ENCODE measurements at regions of chr9 and their contacts with region 1.

Region 1: GRCh38 chr9:97873877-97874276 is 20.9 kb downstream of the FOXE1 start:
- DNase-seq: no peak
- ATAC-seq: no peak
- H3K4me3 ChIP-seq: no peak overlapping the region
- H3K4me3 Mint-ChIP-seq: no peak overlapping the region
- H3K27ac ChIP-seq: no peak overlapping the region
- H3K27ac Mint-ChIP-seq: no peak overlapping the region
- H3K4me1 ChIP-seq: no peaks in the 10 kb centered on the region
- H3K4me1 Mint-ChIP-seq: no peaks in the 10 kb centered on the region
- H3K27me3 ChIP-seq: peaks cover 2 to 8% of the 10 kb centered on the region in 2 experiments
- H3K27me3 Mint-ChIP-seq: peaks cover 5 to 8% of the 10 kb centered on the region in 2 donors

Region 2: DNA sequence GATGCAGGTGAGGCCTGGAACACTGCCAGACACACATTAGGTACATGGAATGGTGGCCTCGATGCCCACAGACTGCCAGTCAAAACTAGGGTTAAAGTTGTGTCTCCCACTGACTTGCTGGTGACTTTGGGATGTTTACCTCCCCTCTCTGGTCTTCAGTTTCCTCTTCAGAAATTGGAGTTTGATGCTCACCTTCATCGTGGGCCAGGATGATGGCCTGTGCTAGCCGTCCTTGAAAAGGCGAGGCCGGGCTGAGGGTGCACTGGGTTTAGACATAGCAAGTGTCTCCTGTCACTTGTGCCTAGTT is 69.9 kb before region 1 on chr9:
- CTCF ChIA-PET with region 1: no interaction called
- POLR2A ChIA-PET with region 1: no interaction called
- DNase-seq: no peak
- ATAC-seq: no peak
- H3K4me3 ChIP-seq: peak overlapping the region; percentile 28 to 46
- H3K4me3 Mint-ChIP-seq: peak overlapping the region; percentile 75 to 81 (median 80)
- H3K27ac ChIP-seq: no peak overlapping the region
- H3K27ac Mint-ChIP-seq: peak overlapping the region; percentile 73
- H3K4me1 ChIP-seq: peaks cover 0 to 12% of the 10 kb centered on the region in 2 experiments
- H3K4me1 Mint-ChIP-seq: peaks cover 5 to 20% (median 10%) of the 10 kb centered on the region in 3 donors
- H3K27me3 ChIP-seq: peaks cover 15 to 18% of the 10 kb centered on the region in 2 experiments
- H3K27me3 Mint-ChIP-seq: peaks cover 15 to 21% of the 10 kb centered on the region in 2 donors

Region 3: GRCh38 chr9:97820373-97820772 is 53.5 kb before region 1 on chr9:
- CTCF ChIA-PET with region 1: no interaction called
- POLR2A ChIA-PET with region 1: no interaction called
- DNase-seq: no peak
- ATAC-seq: no peak
- H3K4me3 ChIP-seq: no peak overlapping the region
- H3K4me3 Mint-ChIP-seq: no peak overlapping the region
- H3K27ac ChIP-seq: no peak overlapping the region
- H3K27ac Mint-ChIP-seq: no peak overlapping the region
- H3K4me1 ChIP-seq: no peaks in the 10 kb centered on the region
- H3K4me1 Mint-ChIP-seq: no peaks in the 10 kb centered on the region
- H3K27me3 ChIP-seq: peaks cover 6 to 18% of the 10 kb centered on the region in 2 experiments
- H3K27me3 Mint-ChIP-seq: peaks cover 48% of the 10 kb centered on the region in 2 donors

Region 4: DNA sequence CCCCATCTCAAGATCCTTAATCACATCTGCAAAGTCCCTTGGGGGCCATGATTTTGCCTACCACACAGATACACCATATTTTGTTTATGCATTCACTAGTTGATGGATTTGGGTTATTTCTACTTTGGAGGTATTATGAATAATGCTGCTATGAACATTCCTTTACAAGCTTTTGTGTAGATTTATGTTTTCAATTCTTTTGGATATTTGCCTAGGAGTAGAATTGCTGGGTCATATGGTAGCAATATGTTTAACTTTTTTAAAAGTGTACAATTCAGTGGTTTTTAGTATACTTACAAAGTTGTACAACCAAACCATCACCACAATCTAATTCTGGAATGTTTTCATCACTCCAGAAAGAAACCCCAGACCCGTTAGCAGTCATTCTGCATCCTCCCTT is 101.5 kb after region 1 on chr9:
- CTCF ChIA-PET with region 1: no interaction called
- POLR2A ChIA-PET with region 1: interaction called in 1 of 2 experiments, 13 read pairs
- DNase-seq: no peak
- ATAC-seq: no peak
- H3K4me3 ChIP-seq: no peak overlapping the region
- H3K4me3 Mint-ChIP-seq: no peak overlapping the region
- H3K27ac ChIP-seq: no peak overlapping the region
- H3K27ac Mint-ChIP-seq: no peak overlapping the region
- H3K4me1 ChIP-seq: peaks cover 0 to 16% of the 10 kb centered on the region in 2 experiments
- H3K4me1 Mint-ChIP-seq: peaks cover 11 to 13% (median 11%) of the 10 kb centered on the region in 3 donors
- H3K27me3 ChIP-seq: peaks cover 0 to 8% of the 10 kb centered on the region in 2 experiments
- H3K27me3 Mint-ChIP-seq: peaks cover 0 to 6% of the 10 kb centered on the region in 2 donors